ENCODE measurements at regions of chr12 and their contacts with region 1.

Region 1: DNA sequence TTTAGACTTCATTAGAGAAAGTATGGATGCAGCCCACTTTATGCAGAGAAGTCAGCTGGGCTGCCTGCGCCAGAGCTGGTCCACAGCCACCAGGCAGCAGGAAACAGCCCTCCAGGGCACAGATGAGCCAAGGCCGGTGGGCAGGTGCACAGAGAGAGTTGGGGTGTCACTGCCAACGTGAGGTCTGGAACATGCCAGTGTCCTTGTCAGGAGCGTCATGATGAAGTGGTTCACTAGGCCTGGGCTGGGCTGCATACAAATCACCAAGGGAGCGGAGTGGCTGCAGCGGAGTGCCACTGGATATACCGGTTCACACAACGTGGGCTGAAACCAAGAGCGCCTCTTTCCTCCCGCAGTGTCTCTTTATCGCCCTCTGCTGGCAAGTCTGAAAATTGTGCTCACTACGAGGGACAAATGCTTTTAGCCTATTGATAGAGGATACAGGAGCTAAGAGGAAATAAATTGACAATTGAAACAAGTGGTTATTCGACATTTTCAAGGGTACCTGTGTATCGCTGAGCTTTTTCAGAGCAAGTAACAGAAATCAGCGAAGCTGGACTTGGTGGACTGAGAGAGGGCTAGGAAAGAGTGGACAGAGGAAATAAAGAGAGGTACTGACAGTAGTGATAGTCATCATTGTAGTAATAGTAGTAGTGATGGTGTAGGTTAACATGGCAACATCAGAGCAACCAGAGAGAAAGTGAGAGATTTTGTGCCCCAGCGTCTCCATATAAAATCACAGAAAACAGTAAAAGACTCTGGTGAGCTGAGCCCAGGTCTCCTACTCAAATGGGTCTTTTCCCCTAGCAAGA is 52.0 kb upstream of the ITPR2 start:
- DNase-seq: peak; percentile 45
- ATAC-seq: peak; percentile 96
- H3K4me3 Mint-ChIP-seq: peak overlapping the region; percentile 76
- H3K27ac Mint-ChIP-seq: peak overlapping the region; percentile 54
- H3K4me1 Mint-ChIP-seq: peaks cover 8% of the 10 kb centered on the region
- H3K27me3 Mint-ChIP-seq: no peaks in the 10 kb centered on the region
- CTCF ChIP-seq: peak; percentile 86

Region 2: GRCh38 chr12:26701604-26702215 is 183.3 kb before region 1 on chr12:
- CTCF ChIA-PET with region 1: interaction called, 3 read pairs
- POLR2A ChIA-PET with region 1: no interaction called
- intact Hi-C with region 1: loop called (anchors 10 kb)
- DNase-seq: no peak
- ATAC-seq: no peak
- H3K4me3 Mint-ChIP-seq: no peak overlapping the region
- H3K27ac Mint-ChIP-seq: no peak overlapping the region
- H3K4me1 Mint-ChIP-seq: peaks cover 4% of the 10 kb centered on the region
- H3K27me3 Mint-ChIP-seq: no peaks in the 10 kb centered on the region
- CTCF ChIP-seq: peak; percentile 58

Region 3: DNA sequence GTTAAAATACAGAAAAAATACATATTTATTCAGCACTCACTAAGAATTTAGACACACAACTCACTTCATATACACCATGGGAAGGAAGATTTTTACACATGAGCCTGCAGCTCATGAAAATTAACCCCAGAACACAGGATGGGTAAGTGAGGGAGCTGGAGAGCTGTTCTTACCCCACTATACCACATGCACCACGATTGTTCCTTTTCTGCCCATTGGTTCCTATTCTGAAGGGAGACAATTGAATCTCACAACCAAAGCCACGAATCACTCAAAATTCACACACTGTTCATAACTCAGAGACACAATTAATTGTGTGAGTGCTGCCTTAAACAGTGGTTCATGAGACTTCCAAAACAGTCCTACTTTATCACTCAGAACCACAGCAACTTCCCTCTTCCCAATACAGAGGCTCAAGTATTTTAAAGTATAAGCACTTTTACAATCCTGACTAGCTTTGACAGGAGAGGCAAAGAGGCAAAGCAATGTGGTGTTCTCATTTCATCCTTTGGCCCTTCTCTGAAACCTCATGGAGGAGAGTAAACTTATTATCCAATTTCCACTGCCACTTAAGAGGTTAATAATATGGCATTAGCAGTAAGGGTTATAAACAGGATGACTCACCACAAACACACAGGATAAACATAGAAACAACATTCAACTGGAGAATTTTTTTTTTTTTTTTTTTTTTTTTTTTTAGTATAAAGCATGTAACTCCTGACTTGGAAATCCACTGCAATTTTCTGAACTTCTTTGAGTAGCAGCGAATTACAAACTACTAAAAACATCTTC is 111.5 kb before region 1 on chr12:
- CTCF ChIA-PET with region 1: no interaction called
- POLR2A ChIA-PET with region 1: no interaction called
- intact Hi-C with region 1: no loop called
- DNase-seq: no peak
- ATAC-seq: no peak
- H3K4me3 Mint-ChIP-seq: no peak overlapping the region
- H3K27ac Mint-ChIP-seq: no peak overlapping the region
- H3K4me1 Mint-ChIP-seq: peaks cover 26% of the 10 kb centered on the region
- H3K27me3 Mint-ChIP-seq: no peaks in the 10 kb centered on the region
- CTCF ChIP-seq: no peak

Region 4: DNA sequence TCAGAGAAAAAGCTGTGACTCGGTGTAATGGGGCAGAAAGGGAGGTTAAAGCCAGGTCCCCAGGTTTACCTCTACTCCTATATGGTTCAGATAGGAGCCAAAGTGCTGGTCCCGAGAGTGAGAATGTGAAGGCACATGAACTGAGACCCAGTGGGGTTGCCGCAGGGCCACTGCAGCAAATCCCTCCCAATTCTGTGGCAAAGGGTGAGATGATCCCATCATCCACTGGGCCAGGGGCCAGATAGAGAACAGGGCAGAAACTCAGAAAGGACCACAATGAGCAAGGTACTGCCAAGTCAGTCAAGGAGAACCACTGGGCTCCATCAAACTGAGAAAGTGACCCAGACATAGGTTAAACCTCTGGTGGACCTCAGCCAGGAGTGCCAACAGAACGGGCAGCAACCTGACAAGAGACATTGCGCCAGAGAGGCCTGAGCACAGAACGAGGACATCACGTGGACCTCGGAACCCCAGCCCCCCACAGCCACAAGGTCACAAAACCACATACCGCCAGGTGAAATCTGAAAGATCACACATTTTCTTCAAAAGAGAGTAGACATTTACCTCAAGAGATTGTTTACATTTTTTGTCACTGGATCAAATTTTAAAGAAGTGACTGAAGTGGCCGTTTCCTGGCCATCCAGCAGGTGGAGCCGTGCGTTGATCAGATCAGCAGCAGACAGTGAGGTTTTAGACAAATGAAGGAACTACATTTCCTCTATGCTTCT is 31.5 kb before region 1 on chr12:
- CTCF ChIA-PET with region 1: interaction called, 11 read pairs
- POLR2A ChIA-PET with region 1: interaction called, 3 read pairs
- intact Hi-C with region 1: loop called (anchors 1 kb)
- DNase-seq: peak; percentile 46
- ATAC-seq: peak; percentile 97
- H3K4me3 Mint-ChIP-seq: no peak overlapping the region
- H3K27ac Mint-ChIP-seq: peak overlapping the region; percentile 38
- H3K4me1 Mint-ChIP-seq: no peaks in the 10 kb centered on the region
- H3K27me3 Mint-ChIP-seq: no peaks in the 10 kb centered on the region
- CTCF ChIP-seq: no peak

Region 5: DNA sequence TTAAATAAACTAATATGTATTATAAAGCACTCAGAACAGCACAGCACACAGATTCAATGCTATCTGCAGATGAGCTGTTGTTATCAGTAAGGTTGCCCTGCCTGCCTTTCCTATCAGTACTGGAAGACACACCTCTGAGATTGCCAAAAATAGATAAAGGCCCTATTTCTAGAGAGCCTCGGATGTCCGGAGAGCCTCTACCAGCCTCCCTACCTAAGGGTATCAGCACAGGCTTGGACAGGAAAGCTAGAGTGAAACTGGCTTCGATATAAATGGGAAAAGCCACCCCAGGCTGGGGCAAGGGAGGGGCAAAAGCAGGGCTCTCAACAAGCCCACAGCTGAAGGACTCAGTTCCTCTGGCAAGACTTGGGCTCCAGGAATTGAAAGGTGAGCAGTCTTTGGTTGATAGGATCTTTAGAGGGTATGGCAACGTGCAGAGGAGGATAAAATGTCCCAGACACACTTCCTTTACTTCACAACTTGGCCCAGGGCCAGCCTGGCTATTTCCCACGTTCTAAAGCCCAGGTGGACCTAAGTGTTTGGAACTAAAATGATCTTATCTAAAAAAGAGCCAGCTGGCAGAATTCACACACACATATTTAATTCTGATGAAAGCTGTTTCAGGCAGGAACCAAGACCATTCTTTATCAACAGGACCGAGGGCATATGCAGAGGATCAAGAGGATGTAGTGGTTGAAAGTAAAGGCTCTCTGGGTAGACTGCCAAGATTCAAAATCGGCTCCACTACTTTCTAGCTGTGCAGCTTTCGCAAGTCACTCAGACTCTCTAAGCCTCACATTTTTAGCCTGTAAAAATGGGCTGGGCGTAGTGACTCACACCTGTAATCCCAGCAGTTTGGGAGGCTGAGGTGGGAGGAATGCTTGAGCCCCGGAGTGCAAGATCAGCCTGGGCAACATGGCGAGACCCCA is 14.2 kb before region 1 on chr12:
- CTCF ChIA-PET with region 1: interaction called, 11 read pairs
- POLR2A ChIA-PET with region 1: no interaction called
- intact Hi-C with region 1: no loop called
- DNase-seq: no peak
- ATAC-seq: no peak
- H3K4me3 Mint-ChIP-seq: no peak overlapping the region
- H3K27ac Mint-ChIP-seq: no peak overlapping the region
- H3K4me1 Mint-ChIP-seq: peaks cover 14% of the 10 kb centered on the region
- H3K27me3 Mint-ChIP-seq: no peaks in the 10 kb centered on the region
- CTCF ChIP-seq: no peak